ENCODE measurements at regions of chr19 and their contacts with region 1.

Region 1: DNA sequence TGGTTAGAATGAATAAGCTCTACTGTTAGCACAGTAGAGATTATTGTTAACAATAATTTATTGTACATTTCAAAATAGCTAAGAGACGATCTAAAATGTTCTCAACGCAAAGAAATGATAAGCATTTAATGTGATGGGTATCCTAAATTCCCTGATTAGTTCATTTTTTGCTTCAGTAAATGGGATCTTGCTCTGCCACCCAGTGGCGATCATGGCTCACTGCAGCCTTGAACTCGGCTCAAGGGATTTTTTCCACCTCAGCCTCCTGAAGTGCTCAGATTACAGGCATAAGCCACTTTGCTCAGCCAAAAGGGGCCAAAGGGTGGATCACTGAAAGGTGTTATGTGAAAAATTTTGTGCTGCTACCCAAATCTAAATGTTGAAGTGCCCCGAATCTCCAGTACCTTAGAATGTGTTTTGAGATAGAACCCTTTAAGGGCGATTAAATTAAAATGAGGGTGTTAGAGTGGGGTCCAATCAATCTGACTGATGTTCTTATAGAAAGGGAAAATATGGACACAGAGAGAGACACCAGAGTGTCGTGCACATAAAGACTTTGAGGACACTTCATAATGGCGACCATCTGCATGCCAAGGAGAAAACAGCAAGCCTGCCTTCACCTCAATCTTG is 31.5 kb upstream of the ZNF766 start:
- DNase-seq: peak; percentile 28
- ATAC-seq: peak; percentile 81
- H3K4me3 Mint-ChIP-seq: no peak overlapping the region
- H3K27ac Mint-ChIP-seq: no peak overlapping the region
- H3K4me1 Mint-ChIP-seq: no peaks in the 10 kb centered on the region
- H3K27me3 Mint-ChIP-seq: no peaks in the 10 kb centered on the region
- CTCF ChIP-seq: peak; percentile 61

Region 2: GRCh38 chr19:51777570-51778462 is 460.1 kb before region 1 on chr19:
- CTCF ChIA-PET with region 1: interaction called, 6 read pairs
- POLR2A ChIA-PET with region 1: no interaction called
- intact Hi-C with region 1: loop called (anchors 10 kb)
- DNase-seq: no peak
- ATAC-seq: peak; percentile 61
- H3K4me3 Mint-ChIP-seq: no peak overlapping the region
- H3K27ac Mint-ChIP-seq: no peak overlapping the region
- H3K4me1 Mint-ChIP-seq: peaks cover 4% of the 10 kb centered on the region
- H3K27me3 Mint-ChIP-seq: peaks cover 56% of the 10 kb centered on the region
- CTCF ChIP-seq: no peak